Head of caudate nucleus (tissue), 42 donors: ENCODE measurements at regions of chr1 and their contacts with region 1.

Region 1: DNA sequence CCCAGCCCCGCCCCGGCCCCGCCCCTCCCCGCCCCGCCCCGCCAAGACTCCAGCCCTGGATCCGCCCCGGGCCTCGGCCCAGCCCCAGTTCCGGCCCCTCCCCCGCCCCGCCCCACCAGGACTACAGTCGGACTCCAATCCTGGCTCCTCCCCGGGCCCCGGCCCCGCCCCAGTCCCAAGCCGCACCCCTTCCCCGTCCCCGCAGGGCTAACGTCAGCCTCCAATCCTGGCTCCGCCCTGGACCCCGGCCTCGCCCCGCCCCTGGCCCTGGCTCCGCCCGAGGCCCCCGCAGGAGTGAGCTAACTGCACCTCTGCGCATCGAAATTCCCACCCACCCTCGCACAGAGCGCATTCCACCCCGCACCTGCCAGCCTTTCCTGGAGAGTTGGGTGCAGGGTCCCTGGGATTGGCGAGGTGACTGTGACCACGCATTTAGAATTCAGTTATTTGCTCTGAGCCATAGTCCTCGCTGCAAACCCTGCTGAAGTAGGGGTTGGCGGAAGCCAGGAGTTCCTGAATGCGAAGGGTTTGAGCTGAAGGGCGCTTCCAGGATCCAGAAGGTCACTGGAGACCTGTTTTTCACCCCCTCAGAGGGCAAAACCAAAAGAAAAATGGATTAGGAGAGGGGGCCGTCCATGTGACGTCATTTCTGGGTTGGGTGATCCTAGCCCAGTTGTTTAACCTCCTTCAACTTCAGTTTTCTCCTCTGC is 588 bp upstream of the IGSF8 start:
- DNase-seq: peak; percentile 95 to 100 (median 99)

Region 2: GRCh38 chr1:160161965-160162705 is 63.1 kb after region 1 on chr1:
- intact Hi-C with region 1: no loop called
- DNase-seq: peak in 41 of 42 donors; percentile 7 to 75 (median 42)

Region 3: DNA sequence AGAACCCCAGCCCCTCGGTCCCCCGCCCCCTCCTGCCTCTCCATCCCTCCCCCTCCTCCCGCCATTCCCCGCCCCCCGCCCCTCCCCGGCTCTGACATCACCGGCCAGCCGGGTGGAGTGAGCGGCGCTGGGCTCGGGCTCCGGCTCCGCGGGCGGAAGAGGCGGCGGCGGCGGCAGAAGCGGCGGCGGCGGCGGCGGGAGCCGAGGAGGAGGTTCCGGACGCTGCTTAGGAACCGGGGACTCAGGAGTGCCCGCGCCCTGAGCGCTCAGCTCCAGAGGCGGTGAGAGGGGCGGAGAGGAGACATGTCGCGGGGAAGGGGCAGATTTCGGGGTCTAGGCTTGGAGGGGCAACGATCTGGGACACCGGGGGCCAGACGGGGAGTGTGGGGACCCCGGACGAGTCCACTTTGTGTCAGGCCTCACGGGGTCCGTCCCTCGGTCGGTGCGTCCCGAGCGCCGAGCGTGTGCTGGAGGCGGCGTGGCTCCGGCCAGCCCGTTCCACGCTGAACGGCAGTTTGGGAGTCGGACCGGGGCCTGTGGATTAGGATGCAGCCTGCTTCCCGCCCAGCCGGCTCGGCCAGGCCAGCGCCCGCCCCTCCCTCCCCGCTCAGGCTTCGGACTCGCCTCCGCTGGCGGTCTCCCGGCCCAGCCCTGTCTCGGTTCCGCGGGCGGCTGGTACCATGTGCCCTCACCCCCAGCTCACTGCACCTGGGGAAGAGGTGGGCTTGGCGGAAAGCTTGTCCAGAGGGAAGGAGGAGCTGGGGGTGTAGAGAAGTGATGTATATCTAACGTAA is 106.4 kb after region 1 on chr1 and contains the start of gene PEA15:
- intact Hi-C with region 1: loop called (anchors 5 kb)
- DNase-seq: peak in 41 of 42 donors; percentile 42 to 92 (median 82)